Heart left ventricle (tissue), 16 donors: ENCODE measurements at regions of chr7 and their contacts with region 1.

Region 1: DNA sequence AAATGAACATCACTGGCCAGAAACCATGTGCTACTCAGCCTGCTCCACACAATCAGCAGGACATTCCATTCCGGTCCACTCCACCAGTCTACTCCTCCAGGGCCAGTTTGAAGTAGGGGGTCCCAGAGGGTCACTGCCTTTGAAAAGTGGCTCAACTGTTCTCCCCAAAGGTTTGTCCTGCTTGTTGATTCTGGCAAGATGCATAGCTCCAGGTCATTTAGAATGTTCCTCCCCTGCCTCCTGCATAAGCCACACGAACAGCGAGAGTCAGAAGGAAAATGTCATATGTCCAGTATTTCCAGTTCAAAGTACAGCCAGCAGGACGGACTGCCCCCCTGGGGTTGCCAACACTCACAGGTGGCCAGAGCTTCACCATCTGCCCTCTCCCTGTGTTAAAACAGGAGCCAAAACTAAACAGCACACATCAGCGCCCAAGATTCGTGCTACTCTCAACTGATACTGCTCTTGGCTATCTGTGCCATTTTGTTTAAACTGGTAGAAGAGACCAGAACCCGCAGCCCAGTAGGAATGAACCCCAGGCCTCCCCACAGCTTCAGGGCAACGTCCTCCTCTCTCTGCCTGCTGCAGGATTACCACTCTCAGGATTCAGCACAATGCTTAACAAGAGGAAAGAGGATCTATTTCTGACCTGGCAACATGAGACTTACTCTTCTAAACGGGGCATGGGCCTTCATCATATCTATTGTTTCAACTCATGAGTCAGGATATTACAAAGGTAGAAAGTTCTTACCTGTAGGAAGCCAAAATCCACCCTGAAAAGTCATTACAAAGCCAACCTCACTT is 11.3 kb downstream of the GRB10 start:
- DNase-seq: no peak
- ATAC-seq: peak; percentile 43 to 65 (median 62)
- H3K4me3 ChIP-seq: no peak overlapping the region
- H3K27ac ChIP-seq: peak overlapping the region in 5 of 12 donors; percentile 9 to 43 (median 25)
- H3K4me1 ChIP-seq: peaks cover 0 to 73% (median 28%) of the 10 kb centered on the region in 12 donors
- H3K27me3 ChIP-seq: no peaks in the 10 kb centered on the region
- CTCF ChIP-seq: no peak
- POLR2A ChIP-seq: no peak

Region 2: GRCh38 chr7:50733555-50733954 is 37.8 kb before region 1 on chr7:
- intact Hi-C with region 1: loop called in 1 of 10 experiments (anchors 5 kb)
- DNase-seq: no peak
- ATAC-seq: peak in 1 of 4 donors; percentile 17
- H3K4me3 ChIP-seq: no peak overlapping the region
- H3K27ac ChIP-seq: no peak overlapping the region
- H3K4me1 ChIP-seq: peaks cover 0 to 50% (median 34%) of the 10 kb centered on the region in 12 donors
- H3K27me3 ChIP-seq: no peaks in the 10 kb centered on the region
- CTCF ChIP-seq: no peak
- POLR2A ChIP-seq: no peak